ENCODE measurements at regions of chr4 and their contacts with region 1.

Region 1: DNA sequence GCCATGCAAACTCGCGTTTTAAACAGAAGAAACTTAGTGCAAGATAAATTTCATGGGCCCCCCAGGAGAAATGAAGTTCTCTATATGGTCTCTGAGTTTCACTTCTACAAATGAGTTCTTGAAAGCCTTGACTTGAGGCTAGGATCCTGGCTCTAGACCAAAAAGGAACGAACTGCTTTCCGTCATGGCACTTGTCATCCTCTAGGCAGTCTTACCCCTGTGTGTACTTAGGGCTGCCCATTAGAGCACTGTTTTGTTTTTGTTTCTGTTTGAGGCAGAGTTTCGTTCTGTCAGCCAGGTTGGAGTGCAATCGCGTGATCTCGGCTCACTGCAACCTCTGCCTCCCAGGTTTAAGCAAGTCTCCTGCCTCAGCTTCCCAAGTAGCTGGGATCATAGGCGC is 29.0 kb downstream of the RNF4 start:
- DNase-seq: no peak
- ATAC-seq: no peak
- H3K4me3 ChIP-seq: no peak overlapping the region
- H3K27ac ChIP-seq: no peak overlapping the region
- H3K4me1 ChIP-seq: no peaks in the 10 kb centered on the region
- H3K27me3 ChIP-seq: no peaks in the 10 kb centered on the region
- CTCF ChIP-seq: no peak

Region 2: GRCh38 chr4:1809754-1810511 is 688.0 kb before region 1 on chr4:
- CTCF ChIA-PET with region 1: no interaction called
- POLR2A ChIA-PET with region 1: no interaction called
- in situ Hi-C with region 1: no loop called
- intact Hi-C with region 1: no loop called
- DNase-seq: peak; percentile 24
- ATAC-seq: peak; percentile 91
- H3K4me3 ChIP-seq: no peak overlapping the region
- H3K27ac ChIP-seq: no peak overlapping the region
- H3K4me1 ChIP-seq: no peaks in the 10 kb centered on the region
- H3K27me3 ChIP-seq: no peaks in the 10 kb centered on the region
- CTCF ChIP-seq: no peak

Region 3: GRCh38 chr4:2402029-2402428 is 95.9 kb before region 1 on chr4:
- CTCF ChIA-PET with region 1: no interaction called
- POLR2A ChIA-PET with region 1: interaction called, 13 read pairs
- in situ Hi-C with region 1: no loop called
- intact Hi-C with region 1: no loop called
- DNase-seq: no peak
- ATAC-seq: peak; percentile 44
- H3K4me3 ChIP-seq: no peak overlapping the region
- H3K27ac ChIP-seq: no peak overlapping the region
- H3K4me1 ChIP-seq: peaks cover 13% of the 10 kb centered on the region
- H3K27me3 ChIP-seq: no peaks in the 10 kb centered on the region
- CTCF ChIP-seq: no peak

Region 4: GRCh38 chr4:2451821-2452785 is 45.8 kb before region 1 on chr4:
- CTCF ChIA-PET with region 1: no interaction called
- POLR2A ChIA-PET with region 1: no interaction called
- in situ Hi-C with region 1: no loop called
- intact Hi-C with region 1: no loop called
- DNase-seq: no peak
- ATAC-seq: peak; percentile 50
- H3K4me3 ChIP-seq: no peak overlapping the region
- H3K27ac ChIP-seq: no peak overlapping the region
- H3K4me1 ChIP-seq: no peaks in the 10 kb centered on the region
- H3K27me3 ChIP-seq: no peaks in the 10 kb centered on the region
- CTCF ChIP-seq: no peak